ENCODE measurements at regions of chr15 and their contacts with region 1.

Region 1: DNA sequence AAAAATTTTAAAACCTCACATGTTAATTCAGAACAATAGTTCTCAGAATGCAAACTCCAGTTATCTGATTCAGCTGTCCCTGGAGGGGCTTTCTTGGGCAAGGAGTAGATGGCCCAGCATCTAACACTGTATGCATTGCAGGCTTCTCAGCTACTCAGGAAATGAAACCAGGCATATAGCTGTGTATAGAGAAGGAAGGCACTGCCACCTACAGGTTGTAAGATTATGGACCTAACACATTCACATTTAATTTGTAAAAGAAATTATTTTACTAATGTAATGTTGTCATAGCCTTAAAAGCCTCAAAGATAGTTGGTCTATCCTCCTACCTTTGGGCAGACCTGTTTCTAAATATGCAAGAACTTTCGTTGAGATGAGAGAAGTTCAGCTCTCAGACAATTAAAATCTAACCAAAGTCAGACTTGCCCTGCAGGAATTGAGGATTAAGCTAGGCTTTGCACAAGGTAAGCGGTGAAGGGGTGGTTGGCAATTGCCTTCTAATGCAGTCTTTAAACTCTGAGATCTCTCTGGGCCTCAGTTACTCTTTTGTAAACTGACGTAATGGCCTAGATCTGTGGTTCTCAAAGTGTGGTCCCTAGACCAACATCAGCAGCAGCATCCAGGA is 132.8 kb upstream of the SLC24A5 start:
- DNase-seq: peak; percentile 21

Region 2: GRCh38 chr15:47196057-47196456 is 792.0 kb before region 1 on chr15:
- CTCF ChIA-PET with region 1: interaction called, 15 read pairs
- POLR2A ChIA-PET with region 1: no interaction called
- DNase-seq: peak; percentile 61

Region 3: GRCh38 chr15:48084759-48085590 is 97.0 kb after region 1 on chr15:
- CTCF ChIA-PET with region 1: interaction called, 10 read pairs
- POLR2A ChIA-PET with region 1: no interaction called
- DNase-seq: peak; percentile 28